ENCODE measurements at regions of chr1 and their contacts with region 1.

Region 1: DNA sequence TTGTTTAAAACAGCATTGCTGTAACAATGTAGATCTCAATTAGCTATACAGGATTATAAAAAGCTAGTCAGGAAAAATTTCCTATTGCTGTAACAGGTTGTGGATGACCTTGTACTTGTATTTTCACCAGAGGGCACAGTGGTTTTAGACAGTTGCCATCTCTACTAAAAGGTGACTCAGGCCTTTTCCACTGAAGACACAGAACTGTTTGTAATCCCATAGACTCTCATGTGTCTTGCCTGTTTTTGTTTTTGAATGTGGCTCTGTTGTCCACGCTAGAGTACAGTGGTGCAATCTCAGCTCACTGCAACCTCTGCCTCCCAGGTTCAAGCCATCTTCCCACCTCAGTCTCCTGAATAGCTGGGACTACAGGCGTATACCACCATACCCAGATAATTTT is 5.9 kb downstream of the MTFR1L start:
- DNase-seq: no peak
- H3K4me3 ChIP-seq: no peak overlapping the region
- H3K27ac ChIP-seq: no peak overlapping the region
- H3K4me1 ChIP-seq: peaks cover 0 to 17% (median 15%) of the 10 kb centered on the region in 4 donors
- H3K27me3 ChIP-seq: no peaks in the 10 kb centered on the region
- CTCF ChIP-seq: no peak

Region 2: GRCh38 chr1:26574719-26575251 is 749.2 kb after region 1 on chr1:
- intact Hi-C with region 1: loop called (anchors 5 kb)
- DNase-seq: no peak
- H3K4me3 ChIP-seq: no peak overlapping the region
- H3K27ac ChIP-seq: no peak overlapping the region
- H3K4me1 ChIP-seq: no peaks in the 10 kb centered on the region
- H3K27me3 ChIP-seq: no peaks in the 10 kb centered on the region
- CTCF ChIP-seq: no peak

Measured in tibial artery (tissue), 4 donors.